Activated CD4-positive, alpha-beta memory T cell treated with anti-CD3 and anti-CD28 coated beads for 36 hours (primary cell): ENCODE measurements at regions of chr12 and their contacts with region 1.

Region 1: DNA sequence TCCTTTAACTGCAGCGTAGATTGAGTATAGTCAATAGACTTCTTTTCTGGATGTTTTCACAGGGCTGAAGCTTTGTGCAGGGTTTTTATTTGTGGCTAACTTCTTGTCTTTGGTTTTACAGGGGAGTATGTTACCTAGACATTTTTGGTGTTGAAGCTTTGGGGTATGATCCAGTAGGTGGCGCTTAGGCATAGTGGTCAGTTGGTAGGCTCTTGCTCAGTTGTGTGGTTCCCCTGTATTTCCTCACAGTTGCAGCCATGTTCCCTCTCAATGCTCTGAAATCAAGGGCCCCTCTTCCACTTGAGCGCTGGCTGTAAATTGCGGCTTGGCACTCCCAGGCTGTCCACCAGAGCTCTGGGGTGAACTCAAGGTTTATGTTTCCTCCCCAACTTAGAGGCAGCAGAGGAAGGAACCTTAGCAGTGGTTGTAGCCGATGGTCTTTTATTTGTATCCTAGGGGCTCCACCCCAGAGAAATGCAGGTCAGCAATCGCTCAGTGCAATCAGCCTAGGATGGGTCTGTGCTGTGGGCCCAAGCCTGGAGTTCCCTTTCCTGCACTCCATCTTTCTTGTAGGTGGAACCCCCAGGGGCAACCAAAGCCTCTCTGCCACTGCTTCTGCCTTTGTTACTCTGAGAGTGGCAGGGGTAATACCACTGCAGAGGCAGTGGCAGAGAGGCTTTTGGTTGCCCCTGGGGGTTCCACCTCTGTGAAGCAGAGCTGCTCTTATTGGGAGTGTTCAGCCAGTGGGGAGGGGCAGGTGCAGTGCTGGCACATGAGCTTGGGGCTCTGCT is 55.1 kb downstream of the CMAS start:
- DNase-seq: peak; percentile 67
- H3K4me3 Mint-ChIP-seq: no peak overlapping the region
- H3K27ac Mint-ChIP-seq: peak overlapping the region; percentile 23
- H3K4me1 Mint-ChIP-seq: peaks cover 19% of the 10 kb centered on the region
- H3K27me3 Mint-ChIP-seq: no peaks in the 10 kb centered on the region

Region 2: DNA sequence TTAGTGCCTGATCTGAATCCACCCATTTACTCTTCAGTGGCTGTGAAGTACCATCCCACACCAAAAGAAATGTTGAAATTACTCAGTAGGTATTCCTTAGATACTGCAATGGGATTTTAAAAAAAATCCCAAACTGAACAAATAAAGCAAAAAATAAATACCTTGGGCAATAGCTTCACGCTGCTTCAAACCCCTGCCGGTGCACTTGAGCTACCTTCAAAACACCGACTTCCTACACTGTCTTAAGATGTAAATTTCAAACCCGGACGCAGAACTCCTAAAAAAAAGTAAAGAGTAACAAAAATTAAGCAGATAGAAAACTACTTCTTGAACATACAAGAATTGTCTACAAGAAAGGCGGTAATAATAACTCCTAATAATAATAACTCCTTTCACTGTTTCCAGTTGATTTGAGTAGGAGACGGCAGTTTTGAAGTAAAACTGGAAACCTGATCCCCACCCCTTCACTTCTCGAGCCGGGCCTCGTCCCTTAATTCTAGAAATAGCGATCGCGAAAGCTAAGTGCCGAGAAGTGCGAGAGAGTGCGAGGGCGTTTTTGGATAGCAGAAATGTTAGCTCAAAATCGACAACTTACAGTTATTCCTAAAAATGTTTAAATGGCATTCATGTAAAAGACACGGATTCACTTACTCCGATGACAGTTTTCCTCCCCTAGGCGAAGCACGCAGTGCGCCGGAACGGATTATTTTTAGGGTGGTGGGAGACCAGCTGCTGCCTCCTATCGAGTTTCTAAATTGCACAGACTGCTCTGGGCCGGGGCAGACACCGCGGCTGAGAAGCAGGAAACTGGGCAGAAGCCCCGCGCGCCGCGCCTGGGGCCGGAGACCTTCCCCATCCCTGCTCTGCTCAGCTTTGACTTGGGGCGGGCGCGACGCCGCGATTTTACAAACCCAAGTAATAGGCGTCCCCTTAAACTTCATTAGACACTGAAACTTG is 160.3 kb before region 1 on chr12 and contains the start of gene ABCC9:
- CTCF ChIA-PET with region 1: no interaction called
- POLR2A ChIA-PET with region 1: no interaction called
- intact Hi-C with region 1: no loop called
- DNase-seq: peak; percentile 33
- H3K4me3 Mint-ChIP-seq: peak within 1 kb of the TSS; percentile 22
- H3K27ac Mint-ChIP-seq: no peak within 1 kb of the TSS
- H3K4me1 Mint-ChIP-seq: peaks cover 16% of the 10 kb centered on the region
- H3K27me3 Mint-ChIP-seq: peaks cover 56% of the 10 kb centered on the region
- total RNA-seq, gene ABCC9: not detected

Region 3: DNA sequence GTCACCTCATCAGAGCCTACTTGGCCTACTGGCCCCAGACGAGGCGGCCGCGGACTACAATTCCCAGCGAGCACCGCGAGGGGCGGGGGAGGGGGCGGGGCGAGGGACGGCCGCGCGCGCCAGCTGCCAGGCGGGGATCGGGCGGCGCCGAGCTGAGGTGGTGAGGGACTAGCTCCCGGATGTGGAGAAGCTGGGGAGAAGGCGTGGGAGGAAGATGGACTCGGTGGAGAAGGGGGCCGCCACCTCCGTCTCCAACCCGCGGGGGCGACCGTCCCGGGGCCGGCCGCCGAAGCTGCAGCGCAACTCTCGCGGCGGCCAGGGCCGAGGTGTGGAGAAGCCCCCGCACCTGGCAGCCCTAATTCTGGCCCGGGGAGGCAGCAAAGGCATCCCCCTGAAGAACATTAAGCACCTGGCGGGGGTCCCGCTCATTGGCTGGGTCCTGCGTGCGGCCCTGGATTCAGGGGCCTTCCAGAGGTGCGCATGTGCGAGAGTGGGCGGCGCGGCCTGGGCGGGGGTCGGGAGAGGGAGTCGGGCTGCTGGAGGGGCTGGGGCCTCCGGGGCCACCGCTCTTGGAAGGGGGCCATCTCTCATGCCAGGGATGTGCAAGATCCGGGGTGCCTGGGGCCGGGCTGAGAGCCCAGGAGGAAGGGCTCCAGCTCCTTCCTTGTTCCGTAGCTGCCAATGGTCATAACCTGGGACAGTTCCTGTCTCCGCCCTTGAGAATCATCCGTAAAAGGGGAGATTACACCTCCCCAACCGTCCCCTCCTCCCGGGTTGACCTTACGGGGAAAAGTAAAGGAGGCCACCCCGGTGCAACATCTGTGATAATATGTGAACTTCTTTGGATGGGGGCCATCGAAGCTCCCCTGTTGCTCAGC is 54.8 kb before region 1 on chr12 and contains the start of gene CMAS:
- CTCF ChIA-PET with region 1: no interaction called
- POLR2A ChIA-PET with region 1: no interaction called
- intact Hi-C with region 1: no loop called
- DNase-seq: peak; percentile 87
- H3K4me3 Mint-ChIP-seq: peak within 1 kb of the TSS; percentile 96
- H3K27ac Mint-ChIP-seq: peak within 1 kb of the TSS; percentile 89
- H3K4me1 Mint-ChIP-seq: peaks cover 51% of the 10 kb centered on the region
- H3K27me3 Mint-ChIP-seq: no peaks in the 10 kb centered on the region
- total RNA-seq, gene CMAS: 51.1 to 51.2 TPM

Region 4: DNA sequence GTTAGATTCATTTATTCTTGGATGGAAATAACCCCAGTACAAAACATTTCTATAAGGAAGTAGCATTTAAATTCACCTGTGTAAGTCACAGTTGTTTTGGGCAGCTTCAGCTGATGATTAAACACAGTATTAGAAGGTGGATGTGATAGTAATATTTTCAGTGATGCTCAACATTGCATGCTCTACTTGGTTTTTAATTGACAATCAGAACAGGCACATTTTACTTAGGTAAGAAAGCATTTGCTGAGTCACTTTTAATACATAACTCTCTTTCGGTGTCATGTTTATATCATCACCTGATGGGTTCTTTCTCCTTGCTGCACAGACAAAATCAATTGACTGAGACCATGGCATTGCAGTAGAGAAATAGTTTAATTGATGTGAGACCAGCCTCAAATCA is 25.6 kb after region 1 on chr12:
- CTCF ChIA-PET with region 1: interaction called, 5 read pairs
- POLR2A ChIA-PET with region 1: no interaction called
- intact Hi-C with region 1: loop called (anchors 2 kb)
- DNase-seq: no peak
- H3K4me3 Mint-ChIP-seq: no peak overlapping the region
- H3K27ac Mint-ChIP-seq: no peak overlapping the region
- H3K4me1 Mint-ChIP-seq: peaks cover 8% of the 10 kb centered on the region
- H3K27me3 Mint-ChIP-seq: no peaks in the 10 kb centered on the region

Region 5: GRCh38 chr12:22173177-22173576 is 72.0 kb after region 1 on chr12:
- CTCF ChIA-PET with region 1: interaction called, 3 read pairs
- POLR2A ChIA-PET with region 1: no interaction called
- intact Hi-C with region 1: loop called (anchors 1 kb)
- DNase-seq: no peak
- H3K4me3 Mint-ChIP-seq: no peak overlapping the region
- H3K27ac Mint-ChIP-seq: no peak overlapping the region
- H3K4me1 Mint-ChIP-seq: peaks cover 5% of the 10 kb centered on the region
- H3K27me3 Mint-ChIP-seq: no peaks in the 10 kb centered on the region

Region 6: GRCh38 chr12:22396253-22396652 is 295.1 kb after region 1 on chr12:
- CTCF ChIA-PET with region 1: no interaction called
- POLR2A ChIA-PET with region 1: no interaction called
- intact Hi-C with region 1: loop called (anchors 5 kb)
- DNase-seq: peak; percentile 37
- H3K4me3 Mint-ChIP-seq: peak overlapping the region; percentile 61
- H3K27ac Mint-ChIP-seq: peak overlapping the region; percentile 75
- H3K4me1 Mint-ChIP-seq: peaks cover 43% of the 10 kb centered on the region
- H3K27me3 Mint-ChIP-seq: no peaks in the 10 kb centered on the region

Region 7: DNA sequence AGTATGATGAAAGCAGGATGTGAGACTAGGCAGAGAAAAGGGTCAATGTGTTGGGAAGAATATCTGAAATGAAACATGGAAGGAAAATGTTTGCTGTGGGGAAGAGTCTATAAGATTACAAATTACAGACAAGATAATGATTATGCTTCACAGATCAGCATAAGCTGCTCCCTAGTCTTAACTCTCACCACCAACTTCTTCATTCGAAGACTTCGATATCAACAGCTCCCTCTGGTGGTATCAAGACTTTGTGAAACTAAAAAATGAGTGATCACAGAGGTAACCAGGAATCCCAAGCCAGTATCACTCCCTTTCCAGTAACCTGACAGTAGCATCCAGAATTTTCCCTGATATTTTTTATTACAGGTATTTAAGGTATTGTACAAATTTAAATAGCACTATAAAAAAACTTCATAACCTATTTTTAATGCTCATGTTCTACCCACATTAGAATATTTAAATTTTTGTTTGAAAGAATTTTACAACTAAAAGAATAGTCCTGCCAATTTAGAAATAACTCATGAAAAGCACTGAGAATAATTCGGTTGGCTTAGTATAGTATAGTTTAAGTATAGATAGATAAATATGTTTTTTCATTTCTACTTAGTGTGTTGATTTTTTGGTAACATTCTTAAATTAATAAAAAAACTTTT is 358.8 kb after region 1 on chr12:
- CTCF ChIA-PET with region 1: interaction called, 21 read pairs
- POLR2A ChIA-PET with region 1: no interaction called
- intact Hi-C with region 1: no loop called
- DNase-seq: no peak
- H3K4me3 Mint-ChIP-seq: no peak overlapping the region
- H3K27ac Mint-ChIP-seq: no peak overlapping the region
- H3K4me1 Mint-ChIP-seq: peaks cover 4% of the 10 kb centered on the region
- H3K27me3 Mint-ChIP-seq: no peaks in the 10 kb centered on the region